Right ventricle myocardium inferior (tissue), 1 donor: ENCODE measurements at regions of chr19 and their contacts with region 1.

Region 1: GRCh38 chr19:8832132-8833021 is at the starts of genes MBD3L1 and ZNF558:
- DNase-seq: peak; percentile 99
- ATAC-seq: peak; percentile 96
- total RNA-seq, gene MBD3L1: not detected
- total RNA-seq, gene ZNF558: 8.8 TPM

Region 2: GRCh38 chr19:9323919-9324583 is 491.7 kb after region 1 on chr19 and contains the start of gene ZNF559:
- intact Hi-C with region 1: loop called (anchors 5 kb)
- DNase-seq: peak; percentile 95
- ATAC-seq: peak; percentile 96
- total RNA-seq, gene ZNF559: 16.6 TPM